HEK293T (cell line): ENCODE measurements at regions of chr4 and their contacts with region 1.

Region 1: GRCh38 chr4:1346781-1347409 is at the start of gene UVSSA:
- DNase-seq: peak; percentile 100

Region 2: DNA sequence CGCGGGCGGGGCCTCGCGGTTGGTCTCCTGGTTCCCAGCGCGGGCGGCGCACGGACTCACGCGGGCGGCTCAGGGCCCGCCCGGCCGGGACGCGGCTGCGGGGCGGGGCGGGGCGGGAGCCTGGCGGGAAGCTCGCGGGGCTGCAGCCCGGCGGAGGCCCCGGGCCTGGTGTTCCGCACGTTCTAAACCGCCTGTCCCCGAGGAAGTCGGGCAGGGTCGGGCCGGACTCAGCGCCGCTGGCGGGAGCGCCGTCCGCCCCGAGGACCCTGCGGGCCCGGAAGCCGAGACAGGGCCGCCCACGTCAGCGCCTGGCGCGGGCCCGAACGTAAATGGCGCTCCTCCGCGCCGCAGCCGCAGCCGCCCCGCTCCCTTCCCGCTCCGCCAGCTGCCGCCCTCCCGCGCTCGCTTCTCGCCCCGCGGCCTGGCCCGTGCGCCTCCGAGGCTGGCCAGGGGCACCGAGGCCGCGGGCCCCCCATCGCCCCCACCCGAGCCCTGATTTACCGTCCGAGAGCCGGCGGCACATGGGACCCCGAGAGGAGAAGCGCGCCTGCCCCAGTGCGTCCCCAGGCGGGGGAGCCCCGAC is 97.7 kb before region 1 on chr4:
- CTCF ChIA-PET with region 1: no interaction called
- POLR2A ChIA-PET with region 1: interaction called, 22 read pairs
- DNase-seq: peak; percentile 92

Region 3: DNA sequence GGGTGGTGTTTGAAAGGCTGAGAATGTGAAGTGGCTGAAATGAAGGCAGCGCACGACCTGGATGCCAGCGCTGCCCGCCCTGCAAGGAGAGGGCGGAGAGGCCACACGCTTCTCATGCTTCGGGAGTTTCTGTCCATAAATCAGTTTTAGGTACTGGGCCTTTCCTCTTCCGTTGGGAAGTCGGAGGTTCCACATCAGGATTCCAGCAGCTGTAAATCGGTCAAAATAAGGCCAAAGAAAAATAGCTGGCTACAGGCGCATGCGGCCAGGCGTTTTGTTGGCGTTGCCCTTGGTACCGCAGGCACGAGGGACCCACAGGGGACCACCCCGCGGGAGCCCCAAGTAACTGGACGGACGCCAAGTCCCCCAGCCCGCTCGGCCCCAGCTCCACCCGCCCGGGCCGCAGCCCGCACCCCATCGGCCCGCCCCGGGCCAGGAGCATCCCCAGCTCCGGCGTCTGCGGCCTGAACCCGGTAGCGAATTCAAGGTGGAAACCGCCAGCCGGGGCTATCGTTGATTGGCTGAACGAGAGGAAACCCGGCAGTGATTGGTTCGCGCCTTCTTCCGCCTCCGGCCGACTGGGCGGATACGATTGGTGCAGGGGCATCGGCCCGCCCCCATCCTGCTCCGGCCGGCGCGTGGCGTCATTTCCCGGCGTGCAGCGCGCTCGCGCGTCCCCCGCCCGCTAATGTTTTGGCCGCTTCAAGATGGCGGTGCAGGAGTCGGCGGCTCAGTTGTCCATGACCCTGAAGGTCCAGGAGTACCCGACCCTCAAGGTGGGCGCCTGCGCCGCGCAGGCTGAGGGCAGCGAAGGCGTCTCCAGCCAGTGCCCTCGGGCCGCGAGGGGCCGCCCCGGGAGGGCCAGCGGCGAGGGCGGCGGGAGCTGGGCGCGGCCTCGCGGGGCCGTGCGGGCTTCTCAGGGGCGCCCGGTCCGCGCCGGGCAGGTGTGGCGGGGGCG is 57.4 kb before region 1 on chr4 and contains the start of gene MAEA:
- CTCF ChIA-PET with region 1: no interaction called
- POLR2A ChIA-PET with region 1: interaction called, 13 read pairs
- DNase-seq: peak; percentile 100

Region 4: GRCh38 chr4:1300466-1301455 is 46.1 kb before region 1 on chr4:
- CTCF ChIA-PET with region 1: no interaction called
- POLR2A ChIA-PET with region 1: no interaction called
- DNase-seq: no peak